A549 (cell line): ENCODE measurements at regions of chr10 and their contacts with region 1.

Region 1: DNA sequence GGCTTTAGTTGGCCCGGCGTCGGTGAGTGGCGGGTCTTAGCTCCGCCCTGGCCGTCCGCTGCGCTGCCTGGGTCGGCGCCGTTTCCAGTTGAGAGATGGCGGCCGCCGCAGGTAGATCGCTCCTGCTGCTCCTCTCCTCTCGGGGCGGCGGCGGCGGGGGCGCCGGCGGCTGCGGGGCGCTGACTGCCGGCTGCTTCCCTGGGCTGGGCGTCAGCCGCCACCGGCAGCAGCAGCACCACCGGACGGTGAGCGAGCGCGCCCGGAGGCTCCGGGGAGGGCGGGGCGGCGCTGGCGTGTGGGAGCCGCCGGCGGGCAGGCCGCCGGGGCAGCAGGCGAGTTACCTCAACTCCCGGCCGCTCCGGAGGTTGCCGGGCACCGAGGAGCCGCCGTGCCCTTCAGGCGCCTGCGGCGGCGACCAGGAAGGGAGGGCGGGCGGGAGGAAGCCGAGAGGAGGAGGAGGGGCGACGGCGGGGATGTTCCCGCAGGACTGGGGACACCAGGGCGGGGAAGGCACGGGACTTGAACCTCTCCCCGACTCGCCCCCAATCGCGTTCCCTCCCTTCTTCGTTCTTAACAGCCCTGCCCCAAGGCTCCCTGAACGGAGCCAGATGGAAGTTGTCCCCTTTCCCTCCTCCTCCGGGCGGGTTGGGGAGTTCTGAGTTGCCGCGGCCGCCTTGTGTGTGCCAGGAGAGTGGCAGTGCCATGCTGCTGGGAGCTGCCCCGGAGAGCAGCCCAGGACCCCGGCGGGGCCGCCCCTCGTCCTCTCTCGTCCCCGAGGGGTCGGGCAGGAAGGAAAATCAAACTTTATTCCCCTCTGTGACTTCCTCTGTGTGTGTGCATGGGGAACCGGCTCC is at the start of gene MCU:
- DNase-seq: peak; percentile 32 to 97
- ATAC-seq: peak; percentile 39 to 61
- H3K4me3 ChIP-seq: peak within 1 kb of the TSS; percentile 80
- H3K27ac ChIP-seq: peak within 1 kb of the TSS; percentile 96 to 99
- H3K4me1 ChIP-seq: peaks cover 72% of the 10 kb centered on the region
- CTCF ChIP-seq: no peak
- EP300 ChIP-seq: no peak
- POLR2A ChIP-seq: peak; percentile 78
- RAD21 ChIP-seq: no peak; a peak in 1 of 5 replicates
- polyA plus RNA-seq, gene MCU: 221 and 226 TPM in 2 replicates

Region 2: GRCh38 chr10:72254813-72255568 is 437.3 kb before region 1 on chr10:
- CTCF ChIA-PET with region 1: no interaction called
- POLR2A ChIA-PET with region 1: interaction called, 11 read pairs
- DNase-seq: peak; percentile 87 to 94
- ATAC-seq: peak; percentile 91 to 92
- H3K4me3 ChIP-seq: no peak overlapping the region
- H3K27ac ChIP-seq: peak overlapping the region; percentile 99 to 100
- H3K4me1 ChIP-seq: peaks cover 69% of the 10 kb centered on the region
- CTCF ChIP-seq: no peak
- EP300 ChIP-seq: no peak
- POLR2A ChIP-seq: peak; percentile 58
- RAD21 ChIP-seq: peak; percentile 53 to 54

Region 3: GRCh38 chr10:72597897-72598296 is 94.4 kb before region 1 on chr10:
- CTCF ChIA-PET with region 1: no interaction called
- POLR2A ChIA-PET with region 1: no interaction called
- DNase-seq: no peak
- ATAC-seq: no peak
- H3K4me3 ChIP-seq: no peak overlapping the region
- H3K27ac ChIP-seq: no peak overlapping the region
- H3K4me1 ChIP-seq: no peaks in the 10 kb centered on the region
- CTCF ChIP-seq: no peak
- EP300 ChIP-seq: no peak
- POLR2A ChIP-seq: no peak
- RAD21 ChIP-seq: no peak

Region 4: GRCh38 chr10:72702868-72703581 is 10.7 kb after region 1 on chr10:
- CTCF ChIA-PET with region 1: interaction called, 8 read pairs
- POLR2A ChIA-PET with region 1: interaction called, 10 read pairs
- DNase-seq: peak in 1 of 2 experiments; percentile 31
- ATAC-seq: peak; percentile 62 to 64; a peak in 4 of 6 replicates
- H3K4me3 ChIP-seq: no peak overlapping the region
- H3K27ac ChIP-seq: no peak overlapping the region
- H3K4me1 ChIP-seq: peaks cover 22% of the 10 kb centered on the region
- CTCF ChIP-seq: no peak
- EP300 ChIP-seq: no peak
- POLR2A ChIP-seq: no peak
- RAD21 ChIP-seq: no peak

Region 5: DNA sequence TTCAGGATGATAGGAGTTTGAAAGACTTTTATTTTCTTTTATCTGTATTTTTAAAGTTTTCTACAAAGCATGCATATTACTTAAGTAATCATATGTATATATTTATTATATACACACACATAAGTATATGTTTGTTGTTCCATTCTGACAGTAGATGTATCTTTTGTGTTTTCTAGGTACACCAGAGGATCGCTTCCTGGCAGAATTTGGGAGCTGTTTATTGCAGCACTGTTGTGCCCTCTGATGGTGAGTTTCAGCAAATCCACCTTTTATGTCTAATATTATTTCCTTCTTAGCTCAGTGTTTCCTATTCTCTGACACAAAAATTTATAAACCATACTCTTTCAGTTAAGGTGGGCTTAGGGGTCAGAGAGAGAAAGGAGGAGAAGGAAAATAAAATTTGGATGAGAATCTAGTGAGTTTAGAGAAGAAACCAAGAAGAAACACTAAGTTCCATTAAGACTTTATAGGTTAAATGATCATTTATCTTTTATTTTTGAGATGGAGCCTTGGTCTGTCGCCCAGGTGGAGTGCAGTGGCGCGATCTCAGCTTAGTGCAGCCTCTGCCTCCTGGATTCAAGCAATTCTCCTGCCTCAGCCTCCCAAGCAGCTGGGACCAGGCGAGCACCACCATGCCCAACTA is 142.0 kb after region 1 on chr10:
- CTCF ChIA-PET with region 1: interaction called, 85 read pairs
- POLR2A ChIA-PET with region 1: interaction called, 8 read pairs
- DNase-seq: peak; percentile 29 to 76
- ATAC-seq: peak; percentile 68 to 81; a peak in 4 of 6 replicates
- H3K4me3 ChIP-seq: no peak overlapping the region
- H3K27ac ChIP-seq: no peak overlapping the region
- H3K4me1 ChIP-seq: peaks cover 46% of the 10 kb centered on the region
- CTCF ChIP-seq: peak; percentile 91
- EP300 ChIP-seq: no peak
- POLR2A ChIP-seq: no peak
- RAD21 ChIP-seq: peak; percentile 94

Region 6: GRCh38 chr10:72862957-72863356 is 170.7 kb after region 1 on chr10:
- CTCF ChIA-PET with region 1: no interaction called
- POLR2A ChIA-PET with region 1: no interaction called
- DNase-seq: no peak
- ATAC-seq: no peak
- H3K4me3 ChIP-seq: no peak overlapping the region
- H3K27ac ChIP-seq: no peak overlapping the region
- H3K4me1 ChIP-seq: no peaks in the 10 kb centered on the region
- CTCF ChIP-seq: no peak
- EP300 ChIP-seq: no peak
- POLR2A ChIP-seq: no peak
- RAD21 ChIP-seq: no peak